ENCODE measurements at regions of chr9 and their contacts with region 1.

Region 1: GRCh38 chr9:123387686-123388085 is 31.7 kb downstream of the CRB2 start:
- DNase-seq: no peak
- ATAC-seq: no peak
- H3K4me3 ChIP-seq: no peak overlapping the region
- H3K4me3 Mint-ChIP-seq: no peak overlapping the region
- H3K27ac ChIP-seq: no peak overlapping the region
- H3K27ac Mint-ChIP-seq: no peak overlapping the region
- H3K4me1 ChIP-seq: no peaks in the 10 kb centered on the region
- H3K4me1 Mint-ChIP-seq: no peaks in the 10 kb centered on the region
- H3K27me3 ChIP-seq: no peaks in the 10 kb centered on the region
- H3K27me3 Mint-ChIP-seq: no peaks in the 10 kb centered on the region

Region 2: GRCh38 chr9:123081824-123082223 is 305.9 kb before region 1 on chr9:
- CTCF ChIA-PET with region 1: interaction called in 1 of 2 experiments, 3 read pairs
- POLR2A ChIA-PET with region 1: interaction called in 1 of 2 experiments, 13 read pairs
- DNase-seq: peak in 10 of 35 experiments; percentile 1 to 55 (median 8)
- ATAC-seq: no peak
- H3K4me3 ChIP-seq: no peak overlapping the region
- H3K4me3 Mint-ChIP-seq: no peak overlapping the region
- H3K27ac ChIP-seq: no peak overlapping the region
- H3K27ac Mint-ChIP-seq: no peak overlapping the region
- H3K4me1 ChIP-seq: no peaks in the 10 kb centered on the region
- H3K4me1 Mint-ChIP-seq: no peaks in the 10 kb centered on the region
- H3K27me3 ChIP-seq: no peaks in the 10 kb centered on the region
- H3K27me3 Mint-ChIP-seq: no peaks in the 10 kb centered on the region

Region 3: GRCh38 chr9:123291736-123292135 is 96.0 kb before region 1 on chr9:
- CTCF ChIA-PET with region 1: no interaction called
- POLR2A ChIA-PET with region 1: interaction called in 1 of 2 experiments, 10 read pairs
- DNase-seq: no peak
- ATAC-seq: no peak
- H3K4me3 ChIP-seq: no peak overlapping the region
- H3K4me3 Mint-ChIP-seq: no peak overlapping the region
- H3K27ac ChIP-seq: no peak overlapping the region
- H3K27ac Mint-ChIP-seq: no peak overlapping the region
- H3K4me1 ChIP-seq: peaks cover 0 to 2% of the 10 kb centered on the region in 2 experiments
- H3K4me1 Mint-ChIP-seq: no peaks in the 10 kb centered on the region
- H3K27me3 ChIP-seq: no peaks in the 10 kb centered on the region
- H3K27me3 Mint-ChIP-seq: peaks cover 6 to 8% of the 10 kb centered on the region in 2 donors

Region 4: GRCh38 chr9:124180557-124180956 is 792.9 kb after region 1 on chr9:
- CTCF ChIA-PET with region 1: interaction called in 1 of 2 experiments, 13 read pairs
- POLR2A ChIA-PET with region 1: no interaction called
- DNase-seq: no peak
- ATAC-seq: no peak
- H3K4me3 ChIP-seq: no peak overlapping the region
- H3K4me3 Mint-ChIP-seq: no peak overlapping the region
- H3K27ac ChIP-seq: no peak overlapping the region
- H3K27ac Mint-ChIP-seq: no peak overlapping the region
- H3K4me1 ChIP-seq: no peaks in the 10 kb centered on the region
- H3K4me1 Mint-ChIP-seq: no peaks in the 10 kb centered on the region
- H3K27me3 ChIP-seq: peaks cover 0 to 9% of the 10 kb centered on the region in 2 experiments
- H3K27me3 Mint-ChIP-seq: peaks cover 9 to 14% of the 10 kb centered on the region in 2 donors

Region 5: GRCh38 chr9:124443625-124444024 is 1055.9 kb after region 1 on chr9:
- CTCF ChIA-PET with region 1: no interaction called
- POLR2A ChIA-PET with region 1: interaction called in 1 of 2 experiments, 10 read pairs
- DNase-seq: no peak
- ATAC-seq: no peak
- H3K4me3 ChIP-seq: no peak overlapping the region
- H3K4me3 Mint-ChIP-seq: no peak overlapping the region
- H3K27ac ChIP-seq: no peak overlapping the region
- H3K27ac Mint-ChIP-seq: no peak overlapping the region
- H3K4me1 ChIP-seq: no peaks in the 10 kb centered on the region
- H3K4me1 Mint-ChIP-seq: no peaks in the 10 kb centered on the region
- H3K27me3 ChIP-seq: peaks cover 3 to 51% of the 10 kb centered on the region in 2 experiments
- H3K27me3 Mint-ChIP-seq: peaks cover 34 to 51% of the 10 kb centered on the region in 2 donors

Measured in T-cell (primary cell).